ENCODE measurements at regions of chr7 and their contacts with region 1.

Region 1: GRCh38 chr7:929311-929711 is 25.2 kb downstream of the ADAP1 start:
- DNase-seq: no peak
- H3K4me3 Mint-ChIP-seq: peak overlapping the region; percentile 53
- H3K27ac Mint-ChIP-seq: peak overlapping the region; percentile 96
- H3K4me1 Mint-ChIP-seq: peaks cover 55% of the 10 kb centered on the region
- H3K27me3 Mint-ChIP-seq: no peaks in the 10 kb centered on the region
- CTCF ChIP-seq: no peak

Region 2: DNA sequence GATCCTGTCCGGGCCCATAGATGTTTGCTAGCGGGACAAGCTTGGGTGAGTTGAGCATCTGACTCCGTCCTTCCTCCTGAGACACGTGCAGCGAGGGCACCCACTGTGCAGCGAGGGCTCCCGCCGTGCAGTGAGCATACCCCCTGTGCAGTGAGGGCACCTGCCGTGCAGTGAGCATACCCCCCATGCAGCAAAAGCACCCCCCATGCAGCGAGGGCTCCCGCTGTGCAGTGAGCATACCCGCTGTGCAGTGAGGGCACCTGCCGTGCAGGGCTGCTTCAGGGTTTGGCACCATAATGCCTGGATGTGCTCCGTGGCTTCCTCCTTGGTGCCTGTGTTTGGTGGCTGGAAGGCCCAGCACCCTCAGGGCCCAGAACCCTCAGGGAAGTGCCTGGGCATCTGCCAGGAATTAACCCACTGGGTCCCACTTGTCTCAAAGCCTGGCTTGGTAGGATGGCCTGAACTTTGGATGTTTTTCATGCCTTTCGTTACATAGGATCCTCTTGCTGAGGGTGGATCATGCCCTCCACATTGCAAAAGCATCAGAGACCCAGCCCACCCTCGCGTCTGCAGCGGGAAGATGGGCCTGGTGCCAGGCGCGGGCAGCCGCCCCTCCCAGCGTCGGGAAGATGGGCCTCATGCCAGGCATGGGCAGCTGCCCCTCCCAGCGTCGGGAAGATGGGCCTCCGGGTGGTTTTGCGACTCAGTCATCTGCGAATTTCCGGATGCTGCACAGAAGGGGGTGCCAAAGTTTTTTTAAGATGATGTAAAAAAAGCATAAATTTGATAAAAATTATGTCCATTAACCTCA is 150.5 kb before region 1 on chr7:
- CTCF ChIA-PET with region 1: no interaction called
- intact Hi-C with region 1: no loop called
- DNase-seq: no peak
- H3K4me3 Mint-ChIP-seq: no peak overlapping the region
- H3K27ac Mint-ChIP-seq: no peak overlapping the region
- H3K4me1 Mint-ChIP-seq: no peaks in the 10 kb centered on the region
- H3K27me3 Mint-ChIP-seq: no peaks in the 10 kb centered on the region
- CTCF ChIP-seq: no peak

Region 3: GRCh38 chr7:909358-910329 is 19.7 kb before region 1 on chr7:
- CTCF ChIA-PET with region 1: interaction called, 10 read pairs
- intact Hi-C with region 1: no loop called
- DNase-seq: no peak
- H3K4me3 Mint-ChIP-seq: no peak overlapping the region
- H3K27ac Mint-ChIP-seq: no peak overlapping the region
- H3K4me1 Mint-ChIP-seq: peaks cover 32% of the 10 kb centered on the region
- H3K27me3 Mint-ChIP-seq: peaks cover 20% of the 10 kb centered on the region
- CTCF ChIP-seq: no peak